HepG2 (cell line): ENCODE measurements at regions of chr7 and their contacts with region 1.

Region 1: GRCh38 chr7:6272481-6273323 is at the start of gene CYTH3:
- DNase-seq: peak; percentile 43
- ATAC-seq: peak; percentile 90
- H3K4me3 ChIP-seq: peak within 1 kb of the TSS; percentile 74 to 95 (median 87)
- H3K27ac ChIP-seq: no peak within 1 kb of the TSS
- H3K4me1 ChIP-seq: peaks cover 31% of the 10 kb centered on the region
- H3K27me3 ChIP-seq: peaks cover 0 to 33% of the 10 kb centered on the region in 2 experiments; a peak in 3 of 5 replicates
- CTCF ChIP-seq: no peak
- EP300 ChIP-seq: no peak
- POLR2A ChIP-seq: peak in 1 of 2 experiments; percentile 66; a peak in 2 of 4 replicates
- RAD21 ChIP-seq: peak; percentile 27; the same call in 1 of the 2 replicates
- total RNA-seq, gene CYTH3: 2.8 and 3.8 TPM in 2 replicates

Region 2: DNA sequence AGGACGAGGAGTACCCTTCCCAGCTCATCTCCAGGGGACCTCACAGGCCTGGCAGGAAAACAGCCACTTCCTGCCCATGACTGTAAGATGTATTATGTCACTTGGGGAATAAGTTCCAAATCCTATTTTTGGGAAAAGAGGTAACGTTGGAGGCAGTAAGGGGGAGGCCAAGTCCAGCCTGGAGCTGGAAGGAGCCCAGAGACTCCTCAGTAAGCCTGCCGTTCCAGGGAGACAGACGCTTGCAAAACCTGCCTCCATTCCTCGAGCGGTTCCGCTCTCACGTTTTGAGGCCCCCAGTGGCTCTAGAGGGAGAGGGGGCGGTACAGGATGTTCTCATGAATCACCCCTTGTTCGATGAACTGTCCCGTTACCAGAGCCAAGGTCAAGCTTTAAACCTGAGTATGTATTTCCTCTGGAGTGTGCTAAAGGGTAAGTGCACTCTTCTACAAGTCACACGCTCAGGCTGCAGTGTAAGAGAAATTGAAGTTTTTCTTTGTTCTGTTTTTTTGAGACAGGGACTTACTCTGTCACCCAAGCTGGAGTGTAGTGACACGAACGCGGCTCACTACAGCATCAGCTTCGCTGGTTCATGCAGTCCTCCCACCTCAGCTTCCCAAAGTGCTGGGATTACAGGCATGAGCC is 45.2 kb after region 1 on chr7:
- CTCF ChIA-PET with region 1: no interaction called
- POLR2A ChIA-PET with region 1: no interaction called
- in situ Hi-C with region 1: no loop called
- intact Hi-C with region 1: loop called (anchors 5 kb)
- DNase-seq: peak; percentile 91
- ATAC-seq: peak; percentile 91
- H3K4me3 ChIP-seq: peak overlapping the region in 2 of 3 experiments; percentile 35 to 54; a peak in 4 of 6 replicates
- H3K27ac ChIP-seq: peak overlapping the region; percentile 18
- H3K4me1 ChIP-seq: peaks cover 23% of the 10 kb centered on the region
- H3K27me3 ChIP-seq: no peaks in the 10 kb centered on the region
- CTCF ChIP-seq: no peak
- EP300 ChIP-seq: peak in 1 of 2 experiments; percentile 60; a peak in 1 of 4 replicates
- POLR2A ChIP-seq: no peak
- RAD21 ChIP-seq: no peak